Dorsolateral prefrontal cortex (tissue), 120 donors: ENCODE measurements at regions of chr3 and their contacts with region 1.

Region 1: DNA sequence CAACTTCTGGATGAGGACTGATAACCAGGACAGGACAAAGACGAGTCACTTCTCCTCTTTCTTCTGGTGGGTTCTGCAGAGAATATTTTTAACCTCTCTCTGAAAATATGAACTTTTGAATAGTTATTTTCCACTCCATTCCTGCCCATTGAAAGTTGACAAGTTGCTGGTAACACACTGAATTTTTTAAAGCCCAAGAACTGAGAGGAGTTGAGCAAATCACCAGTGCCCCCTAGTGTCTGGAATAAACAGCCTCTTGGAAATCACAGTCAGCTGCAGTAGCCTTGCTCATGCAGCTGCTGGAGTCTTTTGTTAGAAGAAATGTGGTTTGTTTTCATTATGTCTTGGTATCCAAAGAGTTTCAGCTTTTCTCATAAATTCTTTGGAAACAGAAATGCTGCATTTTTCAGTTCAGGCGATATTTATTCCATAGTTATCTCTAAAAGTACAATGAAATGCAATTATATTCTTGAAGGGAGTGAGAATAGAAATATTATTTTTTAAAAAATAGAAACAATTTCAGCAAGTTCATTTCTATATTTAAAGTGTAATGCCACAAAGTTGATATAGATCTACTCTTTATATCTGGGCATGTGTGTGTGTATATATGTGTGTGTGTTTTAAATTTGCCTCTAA is 741.0 kb upstream of the CBLB start:
- DNase-seq: peak in 8 of 10 donors; percentile 31 to 75 (median 48)
- H3K4me3 ChIP-seq: peak overlapping the region in 5 of 59 donors; percentile 3 to 33 (median 19)
- H3K27ac ChIP-seq: no peak overlapping the region
- H3K27me3 ChIP-seq: no peaks in the 10 kb centered on the region
- CTCF ChIP-seq: peak; percentile 78 to 96 (median 90)

Region 2: GRCh38 chr3:105686278-105686897 is 923.4 kb before region 1 on chr3:
- intact Hi-C with region 1: loop called (anchors 5 to 10 kb)
- DNase-seq: no peak
- H3K4me3 ChIP-seq: no peak overlapping the region
- H3K27ac ChIP-seq: no peak overlapping the region
- H3K27me3 ChIP-seq: no peaks in the 10 kb centered on the region
- CTCF ChIP-seq: peak; percentile 54 to 89 (median 76)

Region 3: DNA sequence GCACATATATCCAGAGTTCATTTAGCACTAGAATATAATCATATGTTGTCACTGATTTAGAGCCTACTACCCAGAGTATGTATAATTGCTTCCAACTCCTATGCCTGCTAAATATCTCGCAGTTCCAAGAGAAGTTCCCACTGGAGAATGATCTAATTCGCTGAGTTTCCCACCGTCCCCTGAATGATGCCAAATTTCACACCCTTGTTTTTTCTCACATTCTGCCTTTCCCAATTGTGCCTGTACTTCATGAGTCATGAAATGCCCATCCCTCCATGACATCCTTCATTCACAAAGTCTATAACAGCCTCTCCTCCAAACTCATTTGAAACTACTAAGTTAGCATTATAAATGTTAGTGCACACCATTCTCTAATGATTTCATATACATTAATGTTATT is 918.2 kb before region 1 on chr3:
- intact Hi-C with region 1: loop called (anchors 5 to 10 kb)
- DNase-seq: no peak
- H3K4me3 ChIP-seq: no peak overlapping the region
- H3K27ac ChIP-seq: no peak overlapping the region
- H3K27me3 ChIP-seq: no peaks in the 10 kb centered on the region
- CTCF ChIP-seq: no peak

Region 4: DNA sequence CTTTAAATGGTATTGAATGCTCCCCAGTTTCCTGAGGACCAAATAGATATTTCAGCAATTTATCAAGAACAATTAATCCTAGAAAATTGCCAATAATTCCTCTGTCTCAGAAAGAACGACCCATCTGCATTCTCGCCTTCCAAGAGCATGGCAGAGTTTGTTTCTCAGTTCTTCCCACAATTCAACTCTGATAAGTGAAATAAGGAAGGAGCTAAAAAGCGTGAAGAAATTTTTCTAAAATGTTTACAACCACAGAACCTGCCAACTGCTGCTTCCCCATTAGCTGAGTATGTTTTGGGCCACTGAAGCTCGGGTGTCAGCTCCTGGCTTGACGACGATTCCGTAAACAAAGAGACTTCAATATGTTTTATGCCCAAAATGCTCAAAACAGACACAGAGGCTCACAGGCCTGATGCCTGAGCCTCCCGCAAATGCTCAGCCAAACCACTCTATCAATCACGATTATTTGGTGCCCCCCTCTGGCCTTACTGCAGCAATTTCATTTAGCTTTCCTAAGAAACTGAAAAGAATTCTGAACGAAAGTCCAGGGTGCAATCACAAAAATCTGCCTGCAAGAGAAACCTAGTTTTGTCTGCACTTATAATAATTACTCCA is 508.2 kb after region 1 on chr3:
- intact Hi-C with region 1: loop called (anchors 10 kb)
- DNase-seq: peak; percentile 17 to 78 (median 63)
- H3K4me3 ChIP-seq: peak overlapping the region in 9 of 59 donors; percentile 2 to 35 (median 6)
- H3K27ac ChIP-seq: peak overlapping the region in 58 of 59 donors; percentile 13 to 89 (median 74)
- H3K27me3 ChIP-seq: no peaks in the 10 kb centered on the region
- CTCF ChIP-seq: peak; percentile 39 to 85 (median 70)

Region 5: GRCh38 chr3:107124885-107125284 is 515.1 kb after region 1 on chr3:
- intact Hi-C with region 1: loop called in 1 of 2 experiments (anchors 10 kb)
- DNase-seq: no peak
- H3K4me3 ChIP-seq: no peak overlapping the region
- H3K27ac ChIP-seq: no peak overlapping the region
- H3K27me3 ChIP-seq: no peaks in the 10 kb centered on the region
- CTCF ChIP-seq: no peak